GM10248 (cell line): ENCODE measurements at regions of chr1 and their contacts with region 1.

Region 1: GRCh38 chr1:211514030-211514754 is 22.2 kb upstream of the RD3 start:
- DNase-seq: peak; percentile 91
- CTCF ChIP-seq: peak; percentile 74

Region 2: DNA sequence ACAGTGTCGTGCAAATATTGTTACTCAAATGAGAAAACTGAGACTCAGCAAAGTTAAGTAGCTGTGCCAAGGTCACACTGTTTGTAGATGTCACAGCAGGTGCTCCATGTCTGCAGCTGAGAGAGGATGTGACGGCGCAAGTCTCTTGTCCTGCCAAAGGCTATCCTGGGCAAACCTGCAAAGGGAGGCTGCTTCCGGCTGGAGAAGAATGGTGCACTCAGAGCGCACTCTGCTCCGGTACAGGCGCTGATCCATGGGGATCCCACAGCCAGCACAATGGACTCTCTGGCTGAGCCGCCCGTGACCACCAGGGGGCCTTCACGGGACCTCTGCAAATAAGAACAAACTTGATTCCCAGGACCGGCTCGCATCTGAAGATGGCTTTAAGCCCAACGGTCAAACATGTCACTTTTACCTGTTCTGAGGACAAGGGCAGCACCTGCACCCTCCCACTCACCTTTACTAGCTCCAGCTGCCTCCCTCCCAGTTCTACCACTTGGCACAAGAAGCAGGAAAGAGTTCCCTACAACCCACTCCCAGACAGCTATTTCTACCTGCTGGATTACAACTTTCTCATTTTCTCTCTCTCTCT is 44.2 kb before region 1 on chr1:
- CTCF ChIA-PET with region 1: interaction called, 21 read pairs
- POLR2A ChIA-PET with region 1: no interaction called
- DNase-seq: peak; percentile 53
- CTCF ChIP-seq: peak; percentile 73

Region 3: GRCh38 chr1:211476200-211476849 is 37.9 kb before region 1 on chr1:
- CTCF ChIA-PET with region 1: interaction called, 12 read pairs
- POLR2A ChIA-PET with region 1: no interaction called
- DNase-seq: peak; percentile 75
- CTCF ChIP-seq: peak; percentile 83

Region 4: GRCh38 chr1:211495584-211495983 is 18.6 kb before region 1 on chr1:
- CTCF ChIA-PET with region 1: interaction called, 13 read pairs
- POLR2A ChIA-PET with region 1: no interaction called
- DNase-seq: no peak
- CTCF ChIP-seq: no peak

Region 5: GRCh38 chr1:211501711-211502400 is 12.3 kb before region 1 on chr1:
- CTCF ChIA-PET with region 1: interaction called, 42 read pairs
- POLR2A ChIA-PET with region 1: no interaction called
- DNase-seq: no peak
- CTCF ChIP-seq: no peak

Region 6: DNA sequence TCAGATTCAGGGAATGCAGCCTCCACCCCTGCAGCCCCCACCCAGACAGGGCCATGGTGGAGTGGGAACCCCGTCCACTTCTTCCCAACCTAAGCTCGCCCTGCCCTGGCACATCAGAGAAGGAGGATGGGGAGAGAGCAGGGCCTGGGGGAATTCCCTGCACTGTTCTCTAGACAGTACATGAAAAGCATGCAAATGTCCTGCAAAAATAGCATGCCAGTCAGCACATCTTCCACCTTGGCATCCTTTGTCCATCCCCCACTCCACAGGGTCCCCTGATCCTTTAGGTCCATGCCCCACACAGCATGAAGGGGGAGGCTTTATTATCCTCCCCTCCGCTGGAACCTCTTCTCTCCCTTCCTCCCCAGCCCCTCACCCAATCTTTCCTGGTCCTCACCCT is 12.8 kb after region 1 on chr1:
- CTCF ChIA-PET with region 1: interaction called, 58 read pairs
- POLR2A ChIA-PET with region 1: no interaction called
- DNase-seq: peak; percentile 63
- CTCF ChIP-seq: no peak

Region 7: GRCh38 chr1:211543025-211543424 is 28.8 kb after region 1 on chr1:
- CTCF ChIA-PET with region 1: interaction called, 17 read pairs
- POLR2A ChIA-PET with region 1: no interaction called
- DNase-seq: peak; percentile 8
- CTCF ChIP-seq: no peak